PC-9 (cell line): ENCODE measurements at regions of chr11 and their contacts with region 1.

Region 1: GRCh38 chr11:118572061-118572980 is at the start of gene ARCN1:
- DNase-seq: peak; percentile 56 to 61
- H3K4me3 ChIP-seq: peak within 1 kb of the TSS; percentile 98
- H3K27ac ChIP-seq: peak within 1 kb of the TSS; percentile 83
- H3K4me1 ChIP-seq: peaks cover 28% of the 10 kb centered on the region
- H3K27me3 ChIP-seq: no peaks in the 10 kb centered on the region
- CTCF ChIP-seq: no peak
- total RNA-seq, gene ARCN1: 79.8 and 105 TPM in 2 replicates

Region 2: GRCh38 chr11:118530408-118531339 is 41.6 kb before region 1 on chr11 and contains the start of gene TMEM25:
- CTCF ChIA-PET with region 1: no interaction called
- POLR2A ChIA-PET with region 1: interaction called, 3 read pairs
- intact Hi-C with region 1: loop called (anchors 2 kb)
- DNase-seq: peak in 1 of 2 experiments; percentile 67
- H3K4me3 ChIP-seq: peak within 1 kb of the TSS; percentile 77
- H3K27ac ChIP-seq: no peak within 1 kb of the TSS
- H3K4me1 ChIP-seq: peaks cover 19% of the 10 kb centered on the region
- H3K27me3 ChIP-seq: no peaks in the 10 kb centered on the region
- CTCF ChIP-seq: no peak
- total RNA-seq, gene TMEM25: 14.1 and 21.2 TPM in 2 replicates